Activated T-helper 2 cell treated with anti-CD3 and anti-CD28 coated beads, Interferon-gamma antibody, Interleukin-2, Interleukin-4, amounts not matched to agents 10 μg/mL and 5 μg/mL and 100 μg/mL, durations not matched to agents 14 hours and 24 hours and 36 hours (primary cell): ENCODE measurements at regions of chr4 and their contacts with region 1.

Region 1: DNA sequence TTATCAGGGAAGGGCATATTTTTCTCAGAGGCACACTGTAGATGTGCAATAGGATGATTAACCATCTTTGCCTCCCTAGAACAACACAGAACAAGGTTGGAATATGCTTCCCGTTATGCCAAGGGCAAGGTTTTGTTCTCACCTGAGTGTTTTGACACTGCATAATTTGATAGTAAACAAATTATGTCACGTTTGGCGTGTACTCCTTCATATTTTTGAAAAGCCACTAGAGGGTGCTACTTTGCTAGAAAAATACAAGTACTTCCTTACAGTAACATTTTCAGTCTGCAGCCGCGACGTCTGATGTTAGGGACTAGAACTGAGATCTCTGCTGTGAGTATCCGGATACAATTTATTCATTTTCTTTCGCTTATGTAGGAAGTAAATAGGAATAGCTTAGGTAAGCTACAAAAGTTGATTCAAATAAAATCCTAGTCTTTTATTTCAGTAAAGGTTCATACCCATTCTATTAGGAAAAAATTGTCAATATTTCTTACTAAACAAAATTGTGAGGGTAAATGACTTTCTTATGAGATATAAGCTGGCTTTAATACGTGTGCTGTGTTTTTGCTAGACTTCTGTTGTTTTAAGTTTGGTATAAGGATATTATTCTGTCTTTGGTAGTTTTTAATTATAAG is 181.1 kb upstream of the WDFY3 start:
- DNase-seq: no peak
- H3K4me3 Mint-ChIP-seq: no peak overlapping the region
- H3K27ac Mint-ChIP-seq: no peak overlapping the region
- H3K4me1 Mint-ChIP-seq: no peaks in the 10 kb centered on the region
- H3K27me3 Mint-ChIP-seq: no peaks in the 10 kb centered on the region

Region 2: DNA sequence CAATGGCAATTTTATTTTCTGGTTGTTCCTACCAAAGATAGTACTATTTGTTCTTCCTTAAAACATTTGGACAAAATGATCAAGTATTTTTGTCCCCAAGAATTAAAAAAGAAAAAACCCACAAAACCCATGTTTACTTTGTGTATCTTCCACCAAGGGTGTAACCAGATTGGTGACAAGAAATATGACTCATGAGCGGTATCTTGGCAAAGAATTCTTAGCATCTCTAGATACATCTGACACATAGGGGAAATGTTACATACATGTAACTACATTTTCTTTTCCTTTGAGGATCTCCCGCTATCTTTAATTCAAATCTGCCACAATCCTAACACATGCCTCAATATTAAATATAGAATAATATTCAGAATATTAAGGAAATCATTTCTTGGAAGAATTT is 259.7 kb before region 1 on chr4:
- intact Hi-C with region 1: no loop called
- DNase-seq: no peak
- H3K4me3 Mint-ChIP-seq: no peak overlapping the region
- H3K27ac Mint-ChIP-seq: no peak overlapping the region
- H3K4me1 Mint-ChIP-seq: no peaks in the 10 kb centered on the region
- H3K27me3 Mint-ChIP-seq: no peaks in the 10 kb centered on the region

Region 3: DNA sequence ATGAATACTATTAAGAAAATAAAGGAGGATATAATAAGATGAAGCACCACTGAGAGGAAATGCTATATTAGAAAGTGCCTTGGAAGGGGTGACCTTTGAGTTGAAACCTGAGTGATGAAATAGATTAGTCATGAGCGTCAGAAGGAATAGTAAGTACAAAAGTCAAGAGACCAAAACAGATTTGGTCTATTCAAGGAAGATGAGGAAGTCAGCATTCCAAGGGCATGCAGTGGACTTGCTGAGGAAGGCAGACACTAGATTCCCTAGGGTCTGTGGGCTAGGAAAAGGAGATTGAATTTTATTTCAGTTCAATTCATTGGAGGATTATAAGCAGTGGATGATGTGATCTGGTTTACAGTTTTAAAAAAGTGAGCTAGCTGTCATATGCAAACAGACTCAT is 108.0 kb before region 1 on chr4:
- intact Hi-C with region 1: no loop called
- DNase-seq: no peak
- H3K4me3 Mint-ChIP-seq: no peak overlapping the region
- H3K27ac Mint-ChIP-seq: no peak overlapping the region
- H3K4me1 Mint-ChIP-seq: no peaks in the 10 kb centered on the region
- H3K27me3 Mint-ChIP-seq: no peaks in the 10 kb centered on the region

Region 4: DNA sequence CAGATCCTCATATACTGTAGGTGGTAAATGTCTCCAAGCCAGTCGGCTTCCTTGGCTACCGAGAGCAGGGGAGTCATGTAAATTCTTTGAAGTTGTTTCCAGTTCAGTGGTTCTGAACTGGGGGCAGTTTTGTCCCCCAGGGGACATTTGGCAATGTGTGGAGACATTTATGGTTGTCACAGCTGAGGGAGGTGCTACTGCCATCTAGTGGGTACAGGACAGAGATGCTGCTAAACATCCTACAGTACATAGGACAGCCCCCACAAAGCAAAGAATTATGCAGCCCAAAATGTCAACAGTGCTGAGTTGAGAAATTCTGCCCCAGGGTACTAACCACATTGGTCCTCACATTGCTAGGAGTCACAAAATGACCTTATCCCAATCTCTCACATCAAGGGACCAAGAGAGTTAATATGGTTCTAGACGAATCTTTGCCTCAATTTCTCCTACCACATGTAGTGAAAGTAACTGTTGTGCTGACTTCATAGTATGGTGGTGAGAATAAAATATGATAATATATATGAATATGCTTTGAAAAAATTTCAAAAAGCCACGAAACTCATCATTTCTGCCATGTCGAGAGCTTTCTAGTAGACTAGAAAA is 223.0 kb after region 1 on chr4:
- intact Hi-C with region 1: loop called (anchors 1 kb)
- DNase-seq: no peak
- H3K4me3 Mint-ChIP-seq: no peak overlapping the region
- H3K27ac Mint-ChIP-seq: no peak overlapping the region
- H3K4me1 Mint-ChIP-seq: no peaks in the 10 kb centered on the region
- H3K27me3 Mint-ChIP-seq: no peaks in the 10 kb centered on the region

Region 5: GRCh38 chr4:85489273-85490265 is 342.0 kb after region 1 on chr4:
- intact Hi-C with region 1: no loop called
- DNase-seq: no peak
- H3K4me3 Mint-ChIP-seq: no peak overlapping the region
- H3K27ac Mint-ChIP-seq: no peak overlapping the region
- H3K4me1 Mint-ChIP-seq: no peaks in the 10 kb centered on the region
- H3K27me3 Mint-ChIP-seq: no peaks in the 10 kb centered on the region

Region 6: DNA sequence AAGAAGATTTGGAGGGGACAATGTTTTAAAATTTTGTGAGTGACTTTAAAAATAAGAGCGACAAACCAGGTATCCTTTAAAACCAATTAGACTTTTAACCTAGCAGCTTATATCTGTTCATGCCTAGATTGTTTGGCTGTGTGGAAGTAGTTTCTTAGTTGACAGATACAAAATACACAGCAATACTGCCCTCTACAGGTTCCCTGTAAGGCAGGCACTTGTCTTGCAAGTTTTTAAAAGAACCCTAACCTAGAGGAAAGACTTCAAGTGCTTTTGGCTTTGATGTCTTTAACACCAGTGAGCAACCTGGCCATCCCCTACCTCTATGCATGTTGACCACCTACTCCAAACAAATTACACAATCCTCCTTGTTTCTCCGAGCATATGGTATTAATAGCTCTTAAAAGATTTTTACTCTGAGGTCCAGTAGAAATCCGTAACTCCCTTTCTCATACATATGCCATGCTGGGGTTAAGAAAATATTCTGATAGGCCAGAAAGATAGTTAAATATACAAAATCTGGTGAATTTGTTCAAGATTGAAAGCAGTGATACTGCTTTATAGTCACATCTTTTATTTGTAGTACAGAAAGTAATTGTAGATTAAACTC is 600.4 kb after region 1 on chr4:
- intact Hi-C with region 1: loop called (anchors 5 kb)
- DNase-seq: no peak
- H3K4me3 Mint-ChIP-seq: no peak overlapping the region
- H3K27ac Mint-ChIP-seq: no peak overlapping the region
- H3K4me1 Mint-ChIP-seq: no peaks in the 10 kb centered on the region
- H3K27me3 Mint-ChIP-seq: no peaks in the 10 kb centered on the region

Region 7: GRCh38 chr4:85968945-85969819 is 821.6 kb after region 1 on chr4:
- intact Hi-C with region 1: loop called (anchors 10 kb)
- DNase-seq: no peak
- H3K4me3 Mint-ChIP-seq: no peak overlapping the region
- H3K27ac Mint-ChIP-seq: no peak overlapping the region
- H3K4me1 Mint-ChIP-seq: no peaks in the 10 kb centered on the region
- H3K27me3 Mint-ChIP-seq: no peaks in the 10 kb centered on the region

Region 8: DNA sequence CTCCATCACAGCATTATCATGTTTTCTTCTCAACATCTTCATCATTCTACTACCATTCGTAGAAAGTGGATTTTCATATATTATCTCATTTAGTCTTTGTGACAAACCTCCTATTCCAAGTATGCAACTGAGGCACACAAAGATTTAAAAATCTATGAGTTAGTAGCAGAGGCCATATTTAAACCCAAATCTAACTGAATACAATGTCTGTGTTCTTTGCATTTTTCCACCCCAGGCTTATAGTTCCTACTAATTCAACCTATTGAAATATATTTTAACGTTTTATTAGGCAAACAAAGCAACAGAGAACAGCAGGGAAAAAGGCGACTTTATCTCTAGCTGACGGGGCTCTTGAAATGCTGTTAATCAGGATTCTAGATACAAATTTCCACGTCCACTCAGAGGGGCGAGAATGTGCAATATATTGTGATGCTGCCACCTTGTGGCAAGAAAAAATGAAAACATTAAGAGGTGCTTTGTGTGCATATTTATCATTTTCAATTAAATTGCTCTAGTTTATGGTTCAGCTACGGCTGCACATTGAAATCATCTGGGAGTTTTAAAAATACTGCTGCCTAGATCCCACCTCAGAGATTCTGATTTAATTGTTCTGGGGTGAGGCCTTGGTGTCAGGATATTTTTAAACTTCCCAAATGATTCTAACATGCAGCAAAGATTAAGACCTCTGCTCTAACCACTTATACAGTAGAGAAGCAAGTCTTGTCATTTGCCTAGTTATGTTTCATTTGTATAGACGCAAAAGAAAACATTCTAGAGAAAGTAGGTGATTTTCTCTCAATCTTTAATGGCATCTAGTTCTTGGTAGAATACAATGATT is 896.4 kb after region 1 on chr4:
- intact Hi-C with region 1: loop called (anchors 5 kb)
- DNase-seq: no peak
- H3K4me3 Mint-ChIP-seq: no peak overlapping the region
- H3K27ac Mint-ChIP-seq: no peak overlapping the region
- H3K4me1 Mint-ChIP-seq: no peaks in the 10 kb centered on the region
- H3K27me3 Mint-ChIP-seq: no peaks in the 10 kb centered on the region